ENCODE measurements at regions of chr1 and their contacts with region 1.

Region 1: DNA sequence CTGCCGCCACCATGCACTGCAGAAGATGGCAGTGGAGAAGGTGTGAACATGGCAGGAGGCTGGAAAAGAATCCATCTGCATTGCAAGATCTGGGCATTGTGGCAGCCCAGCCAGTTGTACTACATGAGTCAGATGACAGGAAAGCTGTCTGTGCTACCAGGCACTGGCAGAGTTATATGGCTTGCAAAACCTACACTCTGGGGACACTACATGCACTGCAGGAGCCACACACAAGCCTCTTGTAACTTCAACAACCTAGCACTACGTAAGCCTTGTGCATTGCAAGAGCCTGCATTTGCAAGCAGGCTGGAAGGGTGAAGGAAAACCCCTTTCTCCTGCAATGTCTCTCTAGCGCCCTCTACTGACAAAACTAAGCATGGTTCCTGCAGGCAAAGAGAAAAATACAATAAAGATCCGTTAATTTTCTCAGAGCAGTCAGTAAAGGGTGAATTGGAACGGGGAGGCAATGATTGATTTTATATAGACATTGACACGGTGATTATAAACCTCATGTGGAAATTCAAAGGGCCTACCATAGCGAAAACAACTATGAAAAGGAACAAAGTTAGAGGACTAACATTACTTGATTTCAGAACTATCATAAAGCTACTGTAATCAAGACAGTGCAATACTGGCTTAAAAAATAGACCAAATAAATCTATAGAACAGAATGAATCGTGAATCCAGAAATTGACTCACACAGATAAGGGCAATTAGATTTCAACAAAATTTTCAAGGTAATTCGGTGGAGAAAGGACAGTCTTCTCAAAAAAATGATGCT is 26.2 kb upstream of the DYNLT5 start:
- DNase-seq: peak; percentile 66
- H3K4me3 Mint-ChIP-seq: no peak overlapping the region
- H3K27ac Mint-ChIP-seq: no peak overlapping the region
- H3K4me1 Mint-ChIP-seq: no peaks in the 10 kb centered on the region
- H3K27me3 Mint-ChIP-seq: no peaks in the 10 kb centered on the region
- CTCF ChIP-seq: peak; percentile 88

Region 2: GRCh38 chr1:66452162-66452561 is 273.9 kb before region 1 on chr1:
- CTCF ChIA-PET with region 1: interaction called, 3 read pairs
- intact Hi-C with region 1: loop called (anchors 5 kb)
- DNase-seq: no peak
- H3K4me3 Mint-ChIP-seq: no peak overlapping the region
- H3K27ac Mint-ChIP-seq: no peak overlapping the region
- H3K4me1 Mint-ChIP-seq: no peaks in the 10 kb centered on the region
- H3K27me3 Mint-ChIP-seq: no peaks in the 10 kb centered on the region
- CTCF ChIP-seq: no peak

Region 3: DNA sequence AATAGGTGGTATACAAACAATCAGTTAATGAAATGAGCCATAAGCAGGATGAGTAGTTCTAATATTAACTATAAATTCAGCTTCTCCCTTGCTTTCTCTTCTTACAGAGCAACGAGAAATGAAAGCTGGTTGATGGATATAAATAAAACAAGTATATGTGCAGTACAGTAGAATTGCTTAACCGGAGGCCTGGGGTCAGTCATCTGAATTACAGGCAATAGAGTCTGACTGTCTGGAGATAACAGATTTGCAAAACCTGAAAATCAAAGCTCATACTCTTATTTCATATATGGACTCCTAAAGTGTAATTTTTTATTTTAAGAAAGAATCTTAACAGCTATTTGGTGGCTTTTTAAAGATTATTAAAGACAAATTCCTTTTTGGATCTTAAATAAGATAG is 235.3 kb before region 1 on chr1:
- CTCF ChIA-PET with region 1: no interaction called
- intact Hi-C with region 1: no loop called
- DNase-seq: no peak
- H3K4me3 Mint-ChIP-seq: no peak overlapping the region
- H3K27ac Mint-ChIP-seq: no peak overlapping the region
- H3K4me1 Mint-ChIP-seq: no peaks in the 10 kb centered on the region
- H3K27me3 Mint-ChIP-seq: peaks cover 5% of the 10 kb centered on the region
- CTCF ChIP-seq: no peak

Region 4: DNA sequence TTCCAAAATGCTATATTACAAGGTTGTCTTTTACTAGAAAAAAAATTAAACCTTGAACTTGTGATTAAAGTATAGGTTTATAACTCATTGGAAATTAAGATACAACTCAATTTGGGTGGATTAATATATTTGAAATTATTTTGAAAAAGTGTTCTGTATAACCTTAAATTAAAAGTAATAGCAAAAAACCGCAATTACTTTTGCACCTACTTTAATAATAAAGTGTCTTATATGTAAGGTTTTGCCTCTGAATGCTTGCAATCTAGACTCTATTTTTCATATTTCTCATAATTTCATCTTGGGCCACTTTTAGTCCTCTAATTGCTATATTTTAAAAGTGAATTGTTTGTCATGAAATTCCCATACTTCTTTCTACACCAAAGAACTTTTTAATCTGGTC is 62.3 kb before region 1 on chr1:
- CTCF ChIA-PET with region 1: no interaction called
- intact Hi-C with region 1: no loop called
- DNase-seq: no peak
- H3K4me3 Mint-ChIP-seq: no peak overlapping the region
- H3K27ac Mint-ChIP-seq: no peak overlapping the region
- H3K4me1 Mint-ChIP-seq: no peaks in the 10 kb centered on the region
- H3K27me3 Mint-ChIP-seq: peaks cover 31% of the 10 kb centered on the region
- CTCF ChIP-seq: no peak

Measured in Calu3 (cell line).